ENCODE measurements at regions of chr3 and their contacts with region 1.

Region 1: DNA sequence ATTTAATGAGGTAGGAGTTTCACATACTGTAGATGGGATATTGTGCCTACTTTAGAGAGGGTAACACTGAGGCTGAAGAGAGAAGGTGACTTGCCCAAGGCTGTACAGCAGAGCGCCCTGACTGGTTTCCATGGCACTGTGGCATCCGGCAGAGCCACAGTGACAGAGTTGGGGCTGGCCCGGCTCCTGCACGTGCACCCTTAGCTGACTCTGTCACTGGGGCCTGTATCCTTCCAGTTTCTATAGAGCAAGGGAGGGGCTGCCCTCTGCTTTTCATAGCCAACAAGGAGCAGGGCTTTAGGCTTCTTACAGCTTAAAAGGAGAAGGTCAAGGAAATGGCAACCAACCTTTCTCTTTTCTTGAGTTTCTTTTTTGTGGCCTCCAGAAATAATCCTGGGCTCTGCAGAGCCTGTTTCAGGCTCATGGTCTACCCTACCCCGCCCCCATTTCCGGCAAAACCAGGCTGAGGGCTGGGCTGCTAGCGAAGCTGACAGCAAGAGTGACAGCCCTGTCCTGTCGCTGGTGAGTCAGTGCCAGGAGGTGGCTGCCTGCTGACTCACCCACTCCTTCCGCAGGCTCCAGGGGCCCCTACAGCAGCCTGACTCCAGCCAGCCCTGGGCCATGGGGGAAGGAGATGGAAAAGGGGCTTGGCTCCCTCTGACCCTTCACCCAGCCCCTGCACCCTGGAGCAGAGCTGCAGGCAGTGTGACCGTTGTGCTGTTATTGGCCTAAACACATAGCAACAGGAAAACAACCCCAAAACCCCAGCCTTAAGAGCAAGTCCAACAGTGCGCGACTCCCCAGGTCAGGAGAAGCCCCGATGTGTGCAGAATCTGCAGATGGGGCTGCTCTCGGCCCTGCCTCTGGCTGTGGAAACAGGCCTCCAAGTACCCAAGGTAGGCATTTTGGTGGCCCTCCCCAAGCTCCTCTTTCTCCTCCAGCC is 29.8 kb downstream of the SLC6A6 start:
- DNase-seq: peak; percentile 73 to 94 (median 91)
- ATAC-seq: peak; percentile 89
- H3K4me3 ChIP-seq: peak overlapping the region; percentile 53
- H3K4me3 Mint-ChIP-seq: peak overlapping the region; percentile 51 to 90 (median 78)
- H3K27ac ChIP-seq: peak overlapping the region; percentile 84
- H3K27ac Mint-ChIP-seq: peak overlapping the region; percentile 87 to 100 (median 98)
- H3K4me1 ChIP-seq: peaks cover 55 to 81% of the 10 kb centered on the region in 2 donors
- H3K4me1 Mint-ChIP-seq: peaks cover 57 to 85% (median 75%) of the 10 kb centered on the region in 7 donors
- H3K27me3 ChIP-seq: no peaks in the 10 kb centered on the region
- H3K27me3 Mint-ChIP-seq: no peaks in the 10 kb centered on the region

Region 2: DNA sequence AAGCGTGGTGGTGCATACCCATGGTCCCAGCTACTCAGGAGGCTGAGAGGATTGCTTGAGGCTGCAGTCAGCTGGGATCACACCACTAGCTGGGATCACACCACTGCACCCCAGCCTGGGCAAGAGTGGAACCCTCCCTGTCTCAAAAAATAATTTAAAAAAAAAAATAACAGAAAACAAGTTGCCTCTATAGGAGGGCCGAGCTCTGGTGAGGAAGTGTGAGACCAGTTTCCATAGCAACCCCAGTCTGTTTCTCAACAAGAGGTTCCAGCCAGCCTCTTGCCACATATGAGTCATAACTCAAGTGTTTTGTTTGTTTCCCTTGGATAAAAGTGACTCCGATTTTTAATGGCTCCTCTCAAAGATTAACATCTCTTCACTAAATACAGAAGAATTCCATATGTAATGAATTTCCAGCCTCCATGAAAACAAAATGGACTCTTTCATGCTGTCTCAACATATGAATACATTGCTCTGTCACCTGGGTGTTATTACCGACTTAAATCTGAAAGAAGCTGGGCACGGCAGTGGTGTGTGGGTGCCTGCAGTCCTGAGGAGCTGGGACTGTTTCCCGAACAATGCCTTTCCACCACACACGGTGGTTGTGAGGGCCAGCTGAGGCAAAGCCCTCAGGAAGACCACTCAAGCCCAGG is 287.6 kb before region 1 on chr3:
- CTCF ChIA-PET with region 1: no interaction called
- POLR2A ChIA-PET with region 1: no interaction called
- intact Hi-C with region 1: loop called in 1 of 2 experiments (anchors 1 kb)
- DNase-seq: peak; percentile 45 to 93 (median 84)
- ATAC-seq: peak; percentile 75
- H3K4me3 ChIP-seq: peak overlapping the region; percentile 10
- H3K4me3 Mint-ChIP-seq: peak overlapping the region; percentile 53 to 76 (median 66)
- H3K27ac ChIP-seq: peak overlapping the region; percentile 79
- H3K27ac Mint-ChIP-seq: peak overlapping the region; percentile 89 to 100 (median 98)
- H3K4me1 ChIP-seq: peaks cover 50 to 52% of the 10 kb centered on the region in 2 donors
- H3K4me1 Mint-ChIP-seq: peaks cover 34 to 62% (median 56%) of the 10 kb centered on the region in 7 donors
- H3K27me3 ChIP-seq: no peaks in the 10 kb centered on the region
- H3K27me3 Mint-ChIP-seq: no peaks in the 10 kb centered on the region

Region 3: GRCh38 chr3:14261229-14261628 is 170.9 kb before region 1 on chr3:
- CTCF ChIA-PET with region 1: no interaction called
- POLR2A ChIA-PET with region 1: no interaction called
- intact Hi-C with region 1: loop called in 1 of 2 experiments (anchors 1 kb)
- DNase-seq: peak; percentile 32 to 78 (median 62)
- ATAC-seq: peak; percentile 77
- H3K4me3 ChIP-seq: no peak overlapping the region
- H3K4me3 Mint-ChIP-seq: no peak overlapping the region
- H3K27ac ChIP-seq: no peak overlapping the region
- H3K27ac Mint-ChIP-seq: no peak overlapping the region
- H3K4me1 ChIP-seq: no peaks in the 10 kb centered on the region
- H3K4me1 Mint-ChIP-seq: no peaks in the 10 kb centered on the region
- H3K27me3 ChIP-seq: no peaks in the 10 kb centered on the region
- H3K27me3 Mint-ChIP-seq: peaks cover 0 to 14% (median 0%) of the 10 kb centered on the region in 5 donors

Region 4: DNA sequence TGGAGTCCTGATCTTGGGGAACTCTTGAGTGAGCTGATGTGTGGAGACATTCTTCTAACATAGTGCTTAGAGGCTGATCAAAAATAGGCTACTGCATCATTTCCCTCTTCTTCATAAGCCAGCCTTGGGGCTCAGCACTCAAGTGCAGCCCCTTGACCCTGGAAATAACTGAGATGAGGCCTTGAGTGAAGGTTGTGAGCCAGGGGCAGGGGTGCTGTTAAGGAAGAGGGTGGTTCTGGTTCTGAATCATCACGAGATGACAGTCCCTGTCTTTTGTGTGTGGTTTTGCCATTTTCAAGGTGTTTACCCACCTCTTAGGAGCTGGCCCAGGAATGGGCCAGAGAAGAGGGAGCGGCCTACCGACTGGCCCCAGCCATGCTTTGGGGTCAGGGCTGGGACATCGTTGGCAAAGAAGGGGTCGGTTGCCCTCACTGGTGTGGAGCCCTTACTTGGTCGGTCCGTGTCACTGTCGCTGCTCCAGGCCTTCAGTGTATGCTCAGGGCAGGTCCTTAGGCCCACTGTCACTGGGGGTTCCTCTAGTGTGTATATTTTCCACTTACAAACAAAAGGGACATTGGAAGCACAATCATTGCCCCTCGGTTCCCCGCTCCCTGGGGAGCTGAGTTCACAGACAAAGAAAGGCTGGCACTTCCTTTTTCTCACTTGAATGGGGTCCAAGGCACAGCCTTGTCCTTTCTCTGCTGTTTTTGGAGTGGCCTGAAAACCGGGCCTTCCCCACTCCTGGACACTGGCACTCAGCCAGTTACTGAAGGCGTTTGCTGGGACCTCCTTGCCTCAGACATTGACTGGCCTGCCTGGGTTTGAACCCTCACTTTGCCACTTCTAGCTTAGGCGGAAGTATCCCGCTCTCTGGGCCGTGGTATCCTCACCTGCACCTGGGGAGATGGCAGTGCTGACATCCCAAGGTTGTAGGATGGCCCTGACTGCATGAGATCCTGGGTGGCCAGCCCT is 16.9 kb after region 1 on chr3:
- CTCF ChIA-PET with region 1: no interaction called
- POLR2A ChIA-PET with region 1: interaction called, 3 read pairs
- intact Hi-C with region 1: loop called in 1 of 2 experiments (anchors 2 kb)
- DNase-seq: no peak
- ATAC-seq: no peak
- H3K4me3 ChIP-seq: no peak overlapping the region
- H3K4me3 Mint-ChIP-seq: no peak overlapping the region
- H3K27ac ChIP-seq: no peak overlapping the region
- H3K27ac Mint-ChIP-seq: no peak overlapping the region
- H3K4me1 ChIP-seq: no peaks in the 10 kb centered on the region
- H3K4me1 Mint-ChIP-seq: peaks cover 0 to 12% (median 2%) of the 10 kb centered on the region in 7 donors
- H3K27me3 ChIP-seq: no peaks in the 10 kb centered on the region
- H3K27me3 Mint-ChIP-seq: no peaks in the 10 kb centered on the region

Region 5: DNA sequence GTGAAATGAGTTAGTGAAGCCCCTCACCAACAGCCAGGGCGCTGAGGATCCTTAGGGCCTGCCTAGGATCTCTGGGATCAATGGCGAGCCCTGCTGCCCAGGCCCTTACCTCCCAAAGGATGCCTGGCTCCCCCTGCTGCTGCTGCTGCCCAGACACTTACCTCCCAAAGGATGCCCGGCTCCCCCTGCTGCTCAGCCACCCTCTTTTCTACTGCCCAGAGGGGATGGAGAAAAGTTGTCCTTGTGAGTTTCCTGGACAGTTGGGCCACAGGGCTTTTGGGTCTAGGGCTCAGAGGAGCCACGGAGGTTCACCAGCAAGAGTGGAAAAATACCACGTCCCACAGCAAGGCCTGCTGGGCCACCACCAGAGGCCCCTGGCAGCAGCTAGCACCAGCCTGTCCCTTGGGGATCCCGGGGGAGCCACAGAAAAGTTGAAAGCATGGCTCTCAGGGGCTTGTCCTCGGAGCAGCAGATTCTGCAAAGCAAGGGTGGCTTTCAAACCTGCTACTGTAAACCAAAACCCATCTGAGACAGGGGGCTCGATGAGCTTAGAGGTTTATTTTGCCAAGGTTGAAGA is 29.7 kb after region 1 on chr3:
- CTCF ChIA-PET with region 1: interaction called, 12 read pairs
- POLR2A ChIA-PET with region 1: interaction called, 4 read pairs
- intact Hi-C with region 1: loop called (anchors 1 to 2 kb)
- DNase-seq: peak in 6 of 9 donors; percentile 22 to 41 (median 32)
- ATAC-seq: peak; percentile 60
- H3K4me3 ChIP-seq: no peak overlapping the region
- H3K4me3 Mint-ChIP-seq: no peak overlapping the region
- H3K27ac ChIP-seq: peak overlapping the region; percentile 5
- H3K27ac Mint-ChIP-seq: peak overlapping the region in 1 of 9 donors; percentile 10
- H3K4me1 ChIP-seq: no peaks in the 10 kb centered on the region
- H3K4me1 Mint-ChIP-seq: peaks cover 0 to 20% (median 5%) of the 10 kb centered on the region in 7 donors
- H3K27me3 ChIP-seq: no peaks in the 10 kb centered on the region
- H3K27me3 Mint-ChIP-seq: no peaks in the 10 kb centered on the region

Region 6: DNA sequence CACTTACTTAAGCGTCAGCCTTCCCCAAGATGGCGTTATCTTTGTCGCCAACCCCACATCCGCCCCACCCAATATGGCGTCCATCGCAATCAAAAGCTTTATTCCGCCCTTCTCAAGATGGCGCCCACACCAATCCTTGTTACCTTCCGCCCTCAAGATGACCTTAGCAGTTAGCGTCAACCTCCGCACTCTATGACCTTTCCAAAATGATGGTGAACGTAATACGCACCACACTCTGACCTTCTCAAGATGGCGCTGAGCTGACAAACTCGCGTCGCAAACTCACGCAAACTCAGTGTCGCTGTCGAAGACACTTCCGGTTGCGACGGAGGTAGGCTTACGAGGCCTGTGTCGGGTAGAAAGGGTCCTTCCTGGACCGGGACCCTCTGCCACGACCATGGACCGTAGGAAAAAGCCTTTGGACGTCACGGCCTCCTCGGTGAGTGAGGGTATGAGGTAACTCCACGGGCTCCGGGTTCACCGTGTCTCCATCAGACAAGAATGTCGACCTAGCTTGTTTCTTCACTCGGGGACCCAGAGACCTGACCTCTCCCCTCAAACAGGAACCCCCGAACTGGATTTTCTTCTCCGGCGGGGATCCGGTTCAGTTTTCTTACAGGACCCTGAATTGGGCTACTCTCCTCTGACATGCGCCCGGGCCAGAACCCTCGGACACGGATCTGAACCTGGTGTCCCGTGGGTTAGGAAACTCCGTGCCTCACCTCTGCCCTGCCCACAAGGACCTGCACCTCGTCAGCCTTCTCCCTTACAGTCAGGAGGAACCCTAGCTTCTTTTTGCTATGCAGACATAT is 219.5 kb after region 1 on chr3 and contains the start of gene CCDC174:
- CTCF ChIA-PET with region 1: no interaction called
- POLR2A ChIA-PET with region 1: interaction called, 11 read pairs
- intact Hi-C with region 1: loop called (anchors 1 kb)
- DNase-seq: peak; percentile 84 to 98 (median 96)
- ATAC-seq: peak; percentile 99
- H3K4me3 ChIP-seq: peak within 1 kb of the TSS; percentile 90
- H3K4me3 Mint-ChIP-seq: peak within 1 kb of the TSS; percentile 84 to 100 (median 96)
- H3K27ac ChIP-seq: peak within 1 kb of the TSS; percentile 94
- H3K27ac Mint-ChIP-seq: peak within 1 kb of the TSS; percentile 92 to 100 (median 98)
- H3K4me1 ChIP-seq: peaks cover 21 to 25% of the 10 kb centered on the region in 2 donors
- H3K4me1 Mint-ChIP-seq: peaks cover 25 to 80% (median 66%) of the 10 kb centered on the region in 7 donors
- H3K27me3 ChIP-seq: no peaks in the 10 kb centered on the region
- H3K27me3 Mint-ChIP-seq: peaks cover 0 to 2% (median 0%) of the 10 kb centered on the region in 5 donors
- total RNA-seq, gene CCDC174: 21.6 to 59.2 (median 46.2) TPM

Region 7: GRCh38 chr3:15098503-15099363 is 666.6 kb after region 1 on chr3 and contains the start of gene RBSN:
- CTCF ChIA-PET with region 1: no interaction called
- POLR2A ChIA-PET with region 1: no interaction called
- intact Hi-C with region 1: loop called in 1 of 2 experiments (anchors 1 kb)
- DNase-seq: peak; percentile 87 to 96 (median 94)
- ATAC-seq: peak; percentile 87
- H3K4me3 ChIP-seq: peak within 1 kb of the TSS; percentile 83
- H3K4me3 Mint-ChIP-seq: peak within 1 kb of the TSS; percentile 90 to 99 (median 96)
- H3K27ac ChIP-seq: peak within 1 kb of the TSS; percentile 96
- H3K27ac Mint-ChIP-seq: peak within 1 kb of the TSS; percentile 90 to 99 (median 98)
- H3K4me1 ChIP-seq: peaks cover 8 to 14% of the 10 kb centered on the region in 2 donors
- H3K4me1 Mint-ChIP-seq: peaks cover 21 to 42% (median 30%) of the 10 kb centered on the region in 7 donors
- H3K27me3 ChIP-seq: no peaks in the 10 kb centered on the region
- H3K27me3 Mint-ChIP-seq: peaks cover 0 to 9% (median 2%) of the 10 kb centered on the region in 5 donors
- total RNA-seq, gene RBSN: 20.5 to 54.4 (median 39.6) TPM